ENCODE measurements at regions of chr1 and their contacts with region 1.

Region 1: DNA sequence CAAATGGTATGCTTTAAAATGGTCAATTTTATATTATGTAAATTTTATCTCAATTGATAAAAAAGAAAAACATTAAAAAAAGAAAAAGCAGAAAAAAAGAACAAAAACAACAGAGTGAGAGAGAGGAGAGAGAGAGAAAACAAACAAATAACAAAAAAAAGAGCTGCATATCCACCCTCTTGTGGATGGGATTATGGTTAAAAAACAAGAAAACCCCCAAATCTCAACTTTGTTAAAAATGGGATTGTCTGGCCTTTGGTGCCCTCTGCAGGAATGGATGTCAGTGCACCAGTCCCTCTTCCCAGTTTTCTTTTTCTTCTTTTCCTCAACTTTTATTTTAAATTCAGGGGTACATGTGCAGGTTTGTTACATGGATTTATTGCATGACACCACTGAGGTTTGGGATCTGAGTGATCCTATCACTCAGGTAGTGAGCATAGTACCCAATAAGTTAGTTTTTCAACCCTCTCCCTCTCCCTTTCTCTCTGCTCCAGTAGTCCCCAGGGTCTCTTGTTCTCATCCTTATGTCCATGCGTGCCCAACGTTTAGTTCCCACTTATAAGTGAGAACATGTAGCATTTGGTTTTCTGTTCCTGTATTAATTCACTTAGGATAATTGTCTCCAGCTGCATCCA is 28.1 kb downstream of the RNF187 start:
- DNase-seq: no peak
- H3K4me3 ChIP-seq: no peak overlapping the region
- CTCF ChIP-seq: peak; percentile 57

Region 2: GRCh38 chr1:227774821-227775661 is 740.3 kb before region 1 on chr1:
- CTCF ChIA-PET with region 1: no interaction called
- POLR2A ChIA-PET with region 1: no interaction called
- DNase-seq: no peak
- H3K4me3 ChIP-seq: peak overlapping the region; percentile 36
- CTCF ChIP-seq: no peak

Region 3: DNA sequence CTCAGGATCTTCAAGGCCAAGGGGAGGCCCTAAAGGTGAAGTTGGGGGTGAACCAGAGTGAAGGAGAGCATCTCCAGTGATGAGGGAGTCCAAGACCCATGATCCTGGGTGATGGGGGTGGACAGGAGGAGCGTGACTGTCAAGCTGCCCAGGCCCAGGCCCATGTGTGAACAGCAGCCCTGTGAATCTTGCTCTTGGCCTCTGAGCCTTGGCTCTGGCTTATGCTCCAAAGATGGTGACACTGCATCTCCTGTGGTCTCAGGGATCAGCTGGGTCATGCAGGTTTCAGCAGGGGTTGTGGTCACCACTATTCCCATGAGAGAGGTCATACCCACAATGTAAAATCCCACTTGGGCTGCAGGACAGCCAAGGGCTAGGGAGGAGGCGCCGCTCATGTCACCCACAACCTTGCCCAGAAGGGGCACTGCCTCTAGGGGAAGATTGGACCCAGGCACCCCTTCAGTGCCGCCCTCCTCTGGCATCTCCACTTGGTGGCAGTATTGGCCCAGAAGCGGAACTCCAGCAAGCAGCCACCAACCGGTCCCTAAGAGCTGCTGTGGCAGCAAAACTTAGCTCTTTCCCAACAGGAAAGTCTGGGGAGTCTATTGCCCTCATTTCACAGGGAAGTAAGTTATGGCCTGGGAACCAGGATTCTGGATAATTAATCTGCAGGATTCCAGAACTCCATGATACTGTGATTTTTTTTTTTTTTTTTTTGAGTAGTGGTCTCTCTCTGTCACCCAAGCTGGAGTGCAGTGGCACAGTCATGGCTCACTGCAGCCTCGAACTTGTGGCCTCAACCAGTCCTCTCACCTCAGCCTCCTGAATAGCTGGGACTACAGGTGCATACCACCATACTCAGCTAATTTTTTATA is 516.0 kb before region 1 on chr1:
- CTCF ChIA-PET with region 1: interaction called, 11 read pairs
- POLR2A ChIA-PET with region 1: no interaction called
- DNase-seq: no peak
- H3K4me3 ChIP-seq: no peak overlapping the region
- CTCF ChIP-seq: peak; percentile 86

Region 4: DNA sequence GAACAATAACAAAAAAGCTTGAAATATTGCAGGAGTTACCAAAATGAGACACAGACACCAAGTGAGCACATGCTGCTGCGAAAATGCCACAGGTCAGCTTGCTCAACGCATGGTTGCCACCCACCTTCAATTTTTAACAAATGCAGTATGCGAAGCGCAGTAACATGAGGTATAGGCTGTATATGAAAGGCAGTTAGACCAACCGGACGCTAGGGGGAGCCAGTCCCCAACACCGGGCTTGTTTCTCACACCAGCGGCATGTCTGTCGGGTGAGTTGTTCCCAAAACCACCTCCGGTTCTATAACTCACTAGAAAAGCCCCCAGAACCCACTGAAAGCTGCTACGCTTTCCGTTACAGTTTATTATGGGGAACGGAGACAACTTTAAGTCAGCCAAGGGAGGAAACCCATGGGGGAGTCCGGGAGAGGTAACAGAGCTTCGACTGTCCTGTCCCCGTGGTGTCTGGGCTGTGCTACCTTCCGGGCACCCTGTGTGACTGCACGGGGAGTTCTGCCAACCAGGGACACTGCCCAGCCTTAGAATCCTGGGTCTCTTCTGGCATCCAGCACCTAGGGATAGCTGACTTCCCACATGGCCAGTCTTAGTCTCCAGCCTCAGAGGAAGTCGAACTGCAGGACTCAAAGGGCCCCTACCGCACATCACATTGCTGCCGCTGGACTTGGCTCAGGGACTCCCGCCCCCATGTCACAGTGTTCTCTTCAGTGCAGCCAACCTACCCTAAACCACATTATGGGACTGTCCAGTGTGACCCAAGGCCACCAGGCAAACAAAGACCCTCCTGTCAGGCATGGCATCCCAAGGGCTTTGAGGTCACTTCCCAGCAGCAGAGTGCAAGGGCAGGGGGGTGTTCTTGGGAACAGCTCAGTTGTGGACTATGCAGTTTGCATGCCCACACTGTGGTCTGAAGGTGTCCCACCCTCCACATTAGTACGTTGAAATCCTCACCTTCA is 14.1 kb before region 1 on chr1:
- CTCF ChIA-PET with region 1: interaction called, 51 read pairs
- POLR2A ChIA-PET with region 1: no interaction called
- DNase-seq: no peak
- H3K4me3 ChIP-seq: peak overlapping the region; percentile 33
- CTCF ChIP-seq: peak; percentile 92

Region 5: DNA sequence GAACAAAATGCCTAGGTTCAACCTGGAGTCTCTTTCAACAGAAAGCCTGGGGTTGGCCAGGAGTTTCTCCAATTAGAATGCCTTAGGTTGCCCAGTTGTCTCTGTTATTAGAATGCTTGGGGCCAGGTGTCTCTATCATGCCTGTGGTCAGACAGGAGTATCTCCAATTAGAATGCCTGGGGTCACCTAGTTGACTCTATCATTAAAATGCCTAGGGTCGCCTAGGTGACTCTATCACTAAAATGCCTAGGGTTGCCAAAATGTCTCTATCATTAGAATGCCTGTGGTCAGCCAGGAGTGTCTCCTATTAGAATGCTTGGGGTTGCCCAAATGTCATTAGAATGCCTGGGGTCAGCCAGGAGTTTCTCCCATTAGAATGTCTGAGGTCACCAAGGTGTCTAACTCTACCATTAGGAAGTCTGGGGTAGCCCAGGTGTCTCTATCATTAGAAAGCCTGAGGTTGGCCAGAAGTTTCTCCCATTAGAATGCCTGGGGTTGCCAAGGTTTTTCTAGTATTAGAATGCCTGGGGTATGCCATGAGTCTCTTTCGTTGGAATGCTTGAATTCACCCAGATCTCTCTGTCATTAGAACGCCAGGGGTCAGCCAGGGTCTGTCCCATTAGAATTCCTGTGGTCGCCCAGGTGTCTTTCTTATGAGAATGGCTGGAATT is 29.7 kb after region 1 on chr1:
- CTCF ChIA-PET with region 1: no interaction called
- POLR2A ChIA-PET with region 1: no interaction called
- DNase-seq: no peak
- H3K4me3 ChIP-seq: no peak overlapping the region
- CTCF ChIP-seq: no peak